ENCODE measurements at regions of chr1 and their contacts with region 1.

Region 1: GRCh38 chr1:238252033-238252802 is 361.5 kb upstream of the ZP4 start:
- H3K4me3 ChIP-seq: no peak overlapping the region
- H3K27ac ChIP-seq: no peak overlapping the region
- H3K4me1 ChIP-seq: no peaks in the 10 kb centered on the region
- CTCF ChIP-seq: peak; percentile 37

Region 2: DNA sequence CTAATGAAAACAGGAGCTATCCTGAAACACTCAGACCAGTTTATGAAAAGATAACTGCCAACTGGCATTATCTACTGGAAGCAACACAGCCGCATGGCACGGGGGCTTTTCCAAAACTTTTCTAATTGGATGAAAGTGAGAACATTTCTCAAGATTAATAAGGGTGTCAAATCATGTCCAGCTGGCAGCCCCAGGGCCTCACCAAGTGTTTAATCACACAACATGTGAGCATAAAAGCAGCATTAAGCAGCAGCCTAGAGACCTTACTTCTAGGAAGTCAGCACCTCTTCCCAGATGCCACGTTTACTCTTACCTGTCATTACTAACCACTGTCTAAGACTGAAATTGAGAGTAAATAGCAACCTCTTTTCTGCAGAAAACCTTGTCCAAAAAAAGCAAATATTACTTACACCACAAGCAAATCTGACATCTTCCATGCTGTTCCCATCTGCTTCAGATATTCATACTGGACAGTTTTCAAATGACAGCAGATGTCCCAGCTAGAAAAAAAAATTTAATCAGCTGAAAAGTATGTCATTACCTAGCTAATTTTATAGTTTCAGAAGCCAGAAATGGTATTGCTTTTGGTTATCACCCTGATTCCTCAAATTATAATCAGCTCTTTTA is 20.0 kb before region 1 on chr1:
- CTCF ChIA-PET with region 1: interaction called, 17 read pairs
- POLR2A ChIA-PET with region 1: no interaction called
- H3K4me3 ChIP-seq: no peak overlapping the region
- H3K27ac ChIP-seq: no peak overlapping the region
- H3K4me1 ChIP-seq: no peaks in the 10 kb centered on the region
- CTCF ChIP-seq: no peak

Region 3: DNA sequence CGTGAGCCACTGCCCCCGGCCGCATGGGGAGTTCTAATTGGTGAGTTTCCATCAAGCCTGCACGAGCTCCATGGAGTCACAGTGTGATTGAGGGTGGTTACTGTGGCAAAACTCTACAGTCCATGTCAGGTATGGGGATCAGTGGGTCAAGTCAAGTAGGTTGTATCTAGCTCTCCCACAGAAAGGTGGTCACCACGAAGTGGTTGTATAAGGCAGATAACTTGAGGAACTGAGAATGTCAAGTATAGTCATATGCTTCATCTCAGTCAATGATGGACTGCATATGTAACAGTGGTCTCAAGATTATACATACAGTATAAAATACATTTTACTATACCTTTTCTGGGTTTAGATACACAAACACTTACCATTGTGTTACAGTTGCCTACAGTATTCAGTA is 12.9 kb before region 1 on chr1:
- CTCF ChIA-PET with region 1: interaction called, 17 read pairs
- POLR2A ChIA-PET with region 1: no interaction called
- H3K4me3 ChIP-seq: no peak overlapping the region
- H3K27ac ChIP-seq: no peak overlapping the region
- H3K4me1 ChIP-seq: no peaks in the 10 kb centered on the region
- CTCF ChIP-seq: no peak

Region 4: GRCh38 chr1:238272145-238272544 is 19.9 kb after region 1 on chr1:
- CTCF ChIA-PET with region 1: no interaction called
- POLR2A ChIA-PET with region 1: no interaction called
- H3K4me3 ChIP-seq: no peak overlapping the region
- H3K27ac ChIP-seq: no peak overlapping the region
- H3K4me1 ChIP-seq: no peaks in the 10 kb centered on the region
- CTCF ChIP-seq: no peak

Measured in HEK293 (cell line).